ENCODE measurements at regions of chr1 and their contacts with region 1.

Region 1: GRCh38 chr1:24986372-24986965 is 56.4 kb upstream of the RUNX3 start:
- DNase-seq: peak in 1 of 2 donors; percentile 41
- H3K4me3 ChIP-seq: no peak overlapping the region
- H3K27ac ChIP-seq: no peak overlapping the region
- H3K4me1 ChIP-seq: no peaks in the 10 kb centered on the region
- H3K27me3 ChIP-seq: peaks cover 0 to 21% of the 10 kb centered on the region in 2 donors
- CTCF ChIP-seq: no peak

Region 2: DNA sequence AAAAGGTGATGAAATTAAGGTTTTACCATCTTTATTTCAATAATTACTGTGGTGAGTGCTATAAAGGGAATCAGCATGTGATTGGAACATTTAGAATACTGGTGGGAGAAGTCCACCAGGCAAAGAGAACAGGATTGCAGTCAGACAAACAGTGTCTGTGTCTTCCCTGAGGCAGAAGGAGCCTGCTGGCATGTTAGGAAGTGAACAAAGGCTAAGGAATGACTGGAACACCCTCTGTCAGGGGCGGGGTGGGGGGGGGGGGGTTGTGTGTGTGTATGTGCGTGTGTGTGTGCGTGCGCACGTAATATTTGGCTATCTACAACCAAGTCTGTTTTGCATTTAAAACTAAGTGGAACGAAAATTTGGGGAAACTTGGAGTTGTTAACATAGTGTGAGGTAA is 313.1 kb before region 1 on chr1:
- intact Hi-C with region 1: no loop called
- DNase-seq: no peak
- H3K4me3 ChIP-seq: no peak overlapping the region
- H3K27ac ChIP-seq: no peak overlapping the region
- H3K4me1 ChIP-seq: no peaks in the 10 kb centered on the region
- H3K27me3 ChIP-seq: no peaks in the 10 kb centered on the region
- CTCF ChIP-seq: no peak

Region 3: GRCh38 chr1:25017436-25018109 is 31.1 kb after region 1 on chr1:
- intact Hi-C with region 1: loop called (anchors 1 kb)
- DNase-seq: no peak
- H3K4me3 ChIP-seq: no peak overlapping the region
- H3K27ac ChIP-seq: no peak overlapping the region
- H3K4me1 ChIP-seq: peaks cover 0 to 6% (median under 1%) of the 10 kb centered on the region in 4 donors
- H3K27me3 ChIP-seq: peaks cover 0 to 43% of the 10 kb centered on the region in 2 donors
- CTCF ChIP-seq: no peak